GM10248 (cell line): ENCODE measurements at regions of chr12 and their contacts with region 1.

Region 1: GRCh38 chr12:62581288-62582064 is 114.8 kb downstream of the MON2 start:
- DNase-seq: peak; percentile 48
- CTCF ChIP-seq: peak; percentile 55

Region 2: DNA sequence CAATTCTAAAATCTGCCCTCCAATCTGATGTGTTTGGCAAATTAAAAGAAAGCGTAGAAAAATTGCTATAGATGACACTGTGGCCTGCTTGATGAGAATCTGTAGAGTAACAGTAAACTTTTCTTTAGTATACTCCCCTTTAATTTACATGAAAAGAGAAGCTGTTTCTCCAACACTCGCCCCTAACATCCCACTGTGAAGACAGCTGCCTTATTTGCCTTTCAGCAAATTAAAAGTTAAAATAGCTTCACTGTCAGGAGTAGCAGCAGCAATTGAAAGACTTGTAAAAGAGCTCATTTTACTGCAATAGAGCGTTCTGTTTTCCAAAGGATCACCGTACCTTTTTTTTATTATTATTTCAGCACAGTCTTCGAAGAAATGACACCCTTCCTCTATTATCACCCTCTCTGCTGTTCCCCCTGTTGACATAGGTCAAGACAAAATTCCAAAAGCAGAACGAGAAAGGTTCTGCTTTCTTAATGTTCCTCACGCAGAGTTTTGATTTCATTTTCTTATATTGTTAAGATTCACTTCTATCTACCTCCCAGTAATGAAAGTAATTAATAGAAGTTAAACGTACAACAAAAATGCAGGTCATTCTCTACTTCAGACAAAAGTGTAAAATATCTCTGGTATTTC is 474.8 kb before region 1 on chr12:
- CTCF ChIA-PET with region 1: no interaction called
- POLR2A ChIA-PET with region 1: no interaction called
- DNase-seq: no peak
- CTCF ChIP-seq: no peak

Region 3: GRCh38 chr12:62640910-62641448 is 59.5 kb after region 1 on chr12:
- CTCF ChIA-PET with region 1: no interaction called
- POLR2A ChIA-PET with region 1: no interaction called
- DNase-seq: peak; percentile 69
- CTCF ChIP-seq: no peak

Region 4: DNA sequence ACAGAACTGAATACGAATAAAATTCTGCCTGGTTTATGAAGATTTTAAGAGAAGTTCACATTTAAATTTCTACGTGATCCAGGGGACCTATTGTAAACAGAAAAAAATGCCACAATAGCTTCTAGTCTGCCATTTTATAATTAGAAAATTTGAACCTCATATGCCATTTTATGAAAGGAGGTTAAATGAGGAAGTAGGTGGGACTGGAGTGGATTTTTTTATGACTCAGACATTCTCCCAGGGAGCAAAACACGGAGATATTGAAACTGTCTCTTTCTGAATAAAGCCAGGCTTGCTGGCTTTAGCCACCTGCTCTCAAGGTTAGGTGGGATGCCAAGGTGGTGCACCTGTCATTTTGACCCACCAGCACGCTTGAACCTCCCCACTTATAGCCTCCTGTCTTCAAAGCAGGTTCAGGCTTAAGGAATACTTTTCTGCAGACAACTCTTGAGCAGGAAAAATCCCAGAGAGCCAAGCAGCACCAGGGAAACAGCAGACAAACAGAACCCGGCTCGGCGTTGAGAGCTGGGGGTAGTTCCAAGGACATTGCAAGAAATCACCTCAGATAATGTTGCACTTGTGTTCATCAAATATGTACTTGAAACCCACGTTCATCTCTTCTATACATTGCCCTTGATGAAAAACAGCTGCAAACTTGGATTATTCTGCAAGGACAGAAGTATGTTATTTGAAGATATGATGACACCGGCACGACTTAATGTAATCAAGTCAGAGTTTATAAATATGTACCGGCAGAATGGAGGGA is 149.8 kb after region 1 on chr12:
- CTCF ChIA-PET with region 1: no interaction called
- POLR2A ChIA-PET with region 1: no interaction called
- DNase-seq: no peak
- CTCF ChIP-seq: no peak

Region 5: GRCh38 chr12:62813031-62813829 is 231.8 kb after region 1 on chr12:
- CTCF ChIA-PET with region 1: interaction called, 10 read pairs
- POLR2A ChIA-PET with region 1: no interaction called
- DNase-seq: peak; percentile 53
- CTCF ChIP-seq: peak; percentile 78